Endothelial cell of umbilical vein (primary cell): ENCODE measurements at regions of chr2 and their contacts with region 1.

Region 1: DNA sequence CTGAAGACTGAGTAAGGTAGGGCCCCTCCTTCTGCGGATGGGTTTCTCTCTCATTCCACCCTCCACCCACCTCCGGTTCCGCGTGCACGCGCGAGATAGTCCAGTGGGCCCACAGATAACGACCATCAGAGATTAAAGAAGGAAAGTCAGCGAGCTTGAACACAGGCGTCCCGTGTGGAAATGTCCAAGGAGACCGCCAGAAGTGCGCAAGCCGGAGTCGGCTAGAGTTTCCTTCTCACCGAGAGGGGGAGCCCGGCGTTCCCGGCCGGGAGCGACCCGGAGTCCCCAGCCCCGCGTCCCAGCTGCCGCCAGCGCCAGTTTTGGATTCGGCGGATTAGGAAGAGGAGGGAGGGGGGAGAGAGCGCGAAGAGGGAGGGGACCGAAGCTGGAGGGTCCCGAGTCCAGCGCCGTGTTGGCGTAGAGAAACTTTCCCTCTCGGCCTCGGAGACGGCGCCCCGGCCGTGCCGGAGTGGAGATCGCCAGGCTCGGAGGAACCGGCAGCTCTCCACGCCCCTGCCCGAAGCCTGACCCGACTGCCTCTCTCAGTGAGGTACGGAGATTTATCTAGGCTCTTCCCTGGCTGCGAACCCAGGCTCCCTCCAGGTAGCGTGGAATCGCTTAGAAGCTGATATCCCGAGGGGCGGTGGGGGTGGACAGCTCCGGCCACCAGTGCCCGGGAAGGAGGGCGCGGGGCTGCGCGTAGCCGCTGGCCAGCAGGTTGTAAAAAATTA is at the start of gene GULP1:
- DNase-seq: peak; percentile 83
- H3K4me3 ChIP-seq: peak within 1 kb of the TSS; percentile 77 to 84 (median 81)
- H3K27ac ChIP-seq: peak within 1 kb of the TSS; percentile 86
- H3K4me1 ChIP-seq: peaks cover 30% of the 10 kb centered on the region
- H3K27me3 ChIP-seq: no peaks in the 10 kb centered on the region
- CTCF ChIP-seq: peak; percentile 67 to 85
- POLR2A ChIP-seq: no peak
- total RNA-seq, gene GULP1: 43.0 and 53.8 TPM in 2 replicates

Region 2: GRCh38 chr2:187581125-187581896 is 710.5 kb before region 1 on chr2:
- CTCF ChIA-PET with region 1: interaction called, 5 read pairs
- POLR2A ChIA-PET with region 1: no interaction called
- dilution Hi-C with region 1: no loop called
- intact Hi-C with region 1: loop called (anchors 10 kb)
- DNase-seq: peak; percentile 67
- H3K4me3 ChIP-seq: peak overlapping the region in 1 of 3 experiments; percentile 34
- H3K27ac ChIP-seq: peak overlapping the region; percentile 78
- H3K4me1 ChIP-seq: peaks cover 23% of the 10 kb centered on the region
- H3K27me3 ChIP-seq: no peaks in the 10 kb centered on the region
- CTCF ChIP-seq: peak; percentile 45 to 46
- POLR2A ChIP-seq: no peak

Region 3: DNA sequence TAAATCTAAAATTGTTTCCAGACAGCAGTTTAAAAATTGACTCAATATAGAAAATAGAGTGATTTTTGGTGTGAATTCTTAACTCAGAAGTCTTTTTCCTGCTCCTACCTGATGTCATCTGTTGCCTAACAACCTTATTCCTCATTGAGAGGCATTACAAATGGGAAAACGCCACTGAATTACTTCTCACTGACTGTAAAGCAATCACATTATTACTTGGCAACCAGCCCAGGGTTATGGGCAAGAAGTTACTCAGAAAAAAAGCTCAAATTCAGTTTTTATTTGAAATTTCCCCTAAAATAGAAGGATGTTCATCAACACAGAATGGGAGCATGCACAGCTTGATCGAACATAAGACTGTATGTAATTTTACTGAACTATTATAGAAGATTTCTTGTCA is 201.9 kb before region 1 on chr2:
- CTCF ChIA-PET with region 1: no interaction called
- POLR2A ChIA-PET with region 1: no interaction called
- dilution Hi-C with region 1: no loop called
- intact Hi-C with region 1: loop called (anchors 2 kb)
- DNase-seq: peak; percentile 67
- H3K4me3 ChIP-seq: no peak overlapping the region
- H3K27ac ChIP-seq: no peak overlapping the region
- H3K4me1 ChIP-seq: peaks cover 19% of the 10 kb centered on the region
- H3K27me3 ChIP-seq: no peaks in the 10 kb centered on the region
- CTCF ChIP-seq: no peak
- POLR2A ChIP-seq: no peak

Region 4: DNA sequence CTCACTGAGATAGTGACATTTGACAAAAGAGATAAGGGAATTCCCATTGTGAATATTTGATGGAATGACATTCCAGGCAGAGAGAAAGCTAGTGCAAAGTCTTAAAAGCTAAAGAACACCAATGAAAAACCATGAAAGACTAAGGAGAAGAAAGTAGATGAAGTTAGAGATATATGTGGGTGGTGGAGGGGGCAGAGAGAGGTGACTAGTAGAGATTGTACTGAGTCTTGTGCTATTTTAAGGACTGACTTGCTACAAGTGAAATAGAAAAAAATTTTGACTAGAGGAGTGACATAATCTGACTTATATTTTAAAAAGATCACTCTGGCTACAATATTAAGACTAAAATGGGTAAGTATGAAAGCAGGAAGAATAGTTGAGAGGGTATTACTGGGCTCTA is 35.4 kb before region 1 on chr2:
- CTCF ChIA-PET with region 1: no interaction called
- POLR2A ChIA-PET with region 1: no interaction called
- dilution Hi-C with region 1: no loop called
- intact Hi-C with region 1: no loop called
- DNase-seq: no peak
- H3K4me3 ChIP-seq: no peak overlapping the region
- H3K27ac ChIP-seq: no peak overlapping the region
- H3K4me1 ChIP-seq: no peaks in the 10 kb centered on the region
- H3K27me3 ChIP-seq: no peaks in the 10 kb centered on the region
- CTCF ChIP-seq: no peak
- POLR2A ChIP-seq: no peak

Region 5: DNA sequence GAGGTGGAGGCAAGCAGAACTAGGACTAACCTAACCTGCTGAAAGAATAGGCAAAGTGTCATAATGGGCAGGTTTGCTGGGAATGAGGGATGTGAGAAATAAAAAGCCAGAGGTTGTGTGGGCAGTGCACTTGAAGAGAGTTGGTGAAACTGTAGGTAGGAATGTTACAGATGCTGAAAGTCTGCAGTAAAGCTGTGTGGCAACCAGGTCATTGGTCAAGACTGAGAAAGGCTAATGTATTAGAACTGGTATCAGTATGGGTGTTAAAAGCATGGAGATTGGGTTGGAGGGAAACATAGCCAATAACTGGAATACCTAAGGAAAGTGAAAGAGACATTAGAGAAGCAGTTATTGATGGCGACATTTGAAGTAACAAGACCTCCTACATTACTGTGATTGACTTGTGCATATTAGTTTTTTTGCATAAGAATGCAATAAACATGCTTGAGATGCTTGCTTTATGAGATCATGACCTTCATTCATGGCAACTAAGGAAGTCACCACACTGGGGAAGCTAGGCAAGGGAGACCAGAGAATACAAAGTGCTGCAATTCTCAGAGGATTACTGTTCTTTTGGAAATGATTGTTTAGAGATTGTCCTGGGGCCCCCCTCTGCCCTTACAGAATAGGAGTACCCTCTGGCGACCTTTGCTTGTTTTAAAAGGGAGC is 11.7 kb after region 1 on chr2:
- CTCF ChIA-PET with region 1: interaction called, 10 read pairs
- POLR2A ChIA-PET with region 1: no interaction called
- dilution Hi-C with region 1: no loop called
- intact Hi-C with region 1: loop called (anchors 1 kb)
- DNase-seq: peak; percentile 57
- H3K4me3 ChIP-seq: peak overlapping the region in 1 of 3 experiments; percentile 15
- H3K27ac ChIP-seq: peak overlapping the region; percentile 79
- H3K4me1 ChIP-seq: peaks cover 56% of the 10 kb centered on the region
- H3K27me3 ChIP-seq: no peaks in the 10 kb centered on the region
- CTCF ChIP-seq: no peak
- POLR2A ChIP-seq: no peak

Region 6: DNA sequence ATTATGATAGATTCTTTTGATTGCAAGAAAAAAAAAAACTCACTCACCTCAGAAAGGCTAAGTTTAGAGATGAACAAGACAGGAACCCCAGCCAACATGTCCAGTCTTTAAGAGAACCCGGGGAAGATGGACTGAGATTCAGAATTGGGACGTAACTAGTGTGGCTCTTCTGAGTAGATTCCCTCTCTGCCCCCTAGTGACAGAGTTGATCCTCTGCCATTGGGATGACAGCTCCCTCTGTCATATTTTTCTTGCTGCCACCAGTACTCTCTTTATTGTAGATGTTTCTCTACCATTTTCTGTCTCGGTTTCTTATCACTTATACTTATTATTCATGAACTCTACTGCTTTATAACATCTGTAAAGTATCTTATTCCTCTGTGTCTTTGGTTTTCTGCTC is 77.6 kb after region 1 on chr2:
- CTCF ChIA-PET with region 1: interaction called, 122 read pairs
- POLR2A ChIA-PET with region 1: interaction called, 4 read pairs
- dilution Hi-C with region 1: no loop called
- intact Hi-C with region 1: loop called (anchors 1 kb)
- DNase-seq: peak; percentile 70
- H3K4me3 ChIP-seq: no peak overlapping the region
- H3K27ac ChIP-seq: no peak overlapping the region
- H3K4me1 ChIP-seq: no peaks in the 10 kb centered on the region
- H3K27me3 ChIP-seq: no peaks in the 10 kb centered on the region
- CTCF ChIP-seq: peak; percentile 53 to 76
- POLR2A ChIP-seq: no peak

Region 7: GRCh38 chr2:188435115-188435514 is 143.3 kb after region 1 on chr2:
- CTCF ChIA-PET with region 1: no interaction called
- POLR2A ChIA-PET with region 1: no interaction called
- dilution Hi-C with region 1: no loop called
- intact Hi-C with region 1: no loop called
- DNase-seq: no peak
- H3K4me3 ChIP-seq: no peak overlapping the region
- H3K27ac ChIP-seq: no peak overlapping the region
- H3K4me1 ChIP-seq: no peaks in the 10 kb centered on the region
- H3K27me3 ChIP-seq: no peaks in the 10 kb centered on the region
- CTCF ChIP-seq: no peak
- POLR2A ChIP-seq: no peak

Region 8: DNA sequence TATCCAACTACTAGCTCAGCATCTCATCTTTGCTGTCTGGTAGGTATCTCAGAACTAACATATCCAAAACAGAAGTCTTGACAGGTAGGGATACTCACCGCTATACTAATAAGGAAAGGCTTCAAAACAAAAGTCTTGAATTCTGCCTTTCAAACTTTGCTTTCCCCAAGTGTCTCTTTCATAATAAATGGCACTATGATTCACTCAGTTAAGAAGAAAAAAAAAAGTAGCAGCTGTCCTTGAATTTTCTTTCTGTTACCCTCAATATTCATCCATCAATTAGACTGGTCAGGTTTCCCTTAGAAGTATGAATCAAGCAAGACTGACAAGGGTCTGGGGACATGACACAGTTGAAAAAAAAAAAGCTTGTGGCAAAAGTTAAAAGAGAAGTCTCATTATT is 175.0 kb after region 1 on chr2:
- CTCF ChIA-PET with region 1: no interaction called
- POLR2A ChIA-PET with region 1: no interaction called
- dilution Hi-C with region 1: no loop called
- intact Hi-C with region 1: no loop called
- DNase-seq: no peak
- H3K4me3 ChIP-seq: no peak overlapping the region
- H3K27ac ChIP-seq: no peak overlapping the region
- H3K4me1 ChIP-seq: no peaks in the 10 kb centered on the region
- H3K27me3 ChIP-seq: no peaks in the 10 kb centered on the region
- CTCF ChIP-seq: no peak
- POLR2A ChIP-seq: no peak

Region 9: DNA sequence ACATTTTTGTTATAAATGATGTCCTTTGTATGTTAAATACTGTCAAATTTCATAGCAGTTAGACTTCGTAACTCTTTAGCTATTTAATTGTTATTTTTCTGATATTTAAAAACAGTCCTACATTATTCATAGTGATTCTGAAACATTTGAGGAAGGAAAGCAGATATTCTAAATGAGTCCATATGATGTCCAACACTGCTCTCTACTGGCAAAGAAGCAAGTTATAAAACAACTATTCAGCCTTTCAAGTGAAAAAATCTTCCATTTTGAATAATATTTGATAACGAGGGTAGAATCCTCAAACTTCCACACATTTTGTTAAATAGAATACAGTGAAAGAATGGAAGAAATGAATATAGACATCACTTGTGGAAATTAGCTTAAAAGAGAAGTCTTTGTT is 220.7 kb after region 1 on chr2:
- CTCF ChIA-PET with region 1: interaction called, 23 read pairs
- POLR2A ChIA-PET with region 1: no interaction called
- dilution Hi-C with region 1: no loop called
- intact Hi-C with region 1: loop called (anchors 1 kb)
- DNase-seq: peak; percentile 69
- H3K4me3 ChIP-seq: no peak overlapping the region
- H3K27ac ChIP-seq: no peak overlapping the region
- H3K4me1 ChIP-seq: peaks cover 2% of the 10 kb centered on the region
- H3K27me3 ChIP-seq: no peaks in the 10 kb centered on the region
- CTCF ChIP-seq: peak; percentile 9 to 32
- POLR2A ChIP-seq: no peak